ENCODE measurements at regions of chr1 and their contacts with region 1.

Region 1: DNA sequence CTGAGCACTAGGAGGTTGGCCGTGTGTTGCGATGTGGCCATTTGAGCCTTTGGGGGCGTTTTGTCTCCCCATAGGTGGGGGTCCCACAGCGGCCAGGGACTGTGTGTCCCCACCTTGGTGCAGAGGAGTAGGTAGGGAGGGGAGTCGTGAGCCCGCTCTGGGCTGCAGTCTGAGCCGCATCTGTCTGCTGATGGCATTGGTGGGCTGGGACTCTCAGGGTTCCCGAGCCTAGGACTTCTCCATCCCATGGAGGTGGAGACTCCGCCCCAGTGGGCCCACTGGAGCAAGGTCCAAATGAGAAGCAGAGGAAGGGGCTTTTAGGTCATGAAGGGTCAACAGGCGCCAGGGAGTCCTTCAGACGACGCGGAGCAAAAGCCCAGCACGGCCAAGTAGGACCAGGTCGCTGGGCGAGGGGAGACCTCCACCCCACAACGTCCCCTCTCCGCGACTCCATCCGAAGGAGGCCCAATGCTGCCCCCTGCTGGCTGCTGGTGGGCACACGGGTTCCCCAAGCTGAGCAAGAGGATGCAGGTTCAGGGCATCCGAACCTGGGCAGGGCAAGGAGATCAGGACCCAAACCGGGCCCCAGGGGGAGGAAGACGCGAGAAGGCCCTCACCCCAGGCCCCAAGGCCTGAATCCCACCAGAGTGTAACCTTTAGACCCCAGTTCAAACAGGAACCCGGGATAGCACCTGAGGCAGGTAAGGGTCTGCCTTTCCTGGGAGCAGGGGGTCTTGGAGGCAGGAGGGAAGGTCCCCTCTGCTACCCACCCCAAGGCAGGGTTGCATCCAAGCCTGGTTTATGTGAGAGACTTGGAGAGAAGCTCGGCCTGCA is 14.9 kb downstream of the TTC34 start:
- DNase-seq: peak; percentile 47

Region 2: GRCh38 chr1:2194898-2195673 is 591.5 kb before region 1 on chr1:
- in situ Hi-C with region 1: loop called (anchors 25 kb)
- DNase-seq: peak; percentile 89

Region 3: DNA sequence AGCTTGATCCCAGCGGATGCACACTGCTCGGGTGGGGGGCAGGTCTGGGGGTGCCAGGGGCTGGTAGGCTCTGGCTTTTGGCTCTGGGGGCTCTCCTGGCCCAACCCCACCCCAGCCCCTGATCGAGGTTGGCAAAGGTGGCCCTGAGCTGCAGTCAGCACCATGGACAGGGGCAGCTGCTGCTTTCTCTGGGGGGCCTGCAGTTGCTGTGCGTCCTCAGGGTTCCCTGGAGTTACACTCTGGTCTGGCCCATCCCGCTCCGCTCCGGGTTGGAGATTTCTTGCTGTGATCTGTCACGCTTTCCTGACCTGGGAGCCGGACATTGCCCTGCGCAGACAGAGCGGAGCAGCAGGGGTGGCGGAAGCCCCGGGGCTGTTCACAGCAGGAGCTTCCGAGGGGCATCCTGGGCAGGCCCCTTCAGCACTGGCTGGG is 318.5 kb before region 1 on chr1:
- in situ Hi-C with region 1: loop called (anchors 25 kb)
- DNase-seq: peak; percentile 21

Region 4: DNA sequence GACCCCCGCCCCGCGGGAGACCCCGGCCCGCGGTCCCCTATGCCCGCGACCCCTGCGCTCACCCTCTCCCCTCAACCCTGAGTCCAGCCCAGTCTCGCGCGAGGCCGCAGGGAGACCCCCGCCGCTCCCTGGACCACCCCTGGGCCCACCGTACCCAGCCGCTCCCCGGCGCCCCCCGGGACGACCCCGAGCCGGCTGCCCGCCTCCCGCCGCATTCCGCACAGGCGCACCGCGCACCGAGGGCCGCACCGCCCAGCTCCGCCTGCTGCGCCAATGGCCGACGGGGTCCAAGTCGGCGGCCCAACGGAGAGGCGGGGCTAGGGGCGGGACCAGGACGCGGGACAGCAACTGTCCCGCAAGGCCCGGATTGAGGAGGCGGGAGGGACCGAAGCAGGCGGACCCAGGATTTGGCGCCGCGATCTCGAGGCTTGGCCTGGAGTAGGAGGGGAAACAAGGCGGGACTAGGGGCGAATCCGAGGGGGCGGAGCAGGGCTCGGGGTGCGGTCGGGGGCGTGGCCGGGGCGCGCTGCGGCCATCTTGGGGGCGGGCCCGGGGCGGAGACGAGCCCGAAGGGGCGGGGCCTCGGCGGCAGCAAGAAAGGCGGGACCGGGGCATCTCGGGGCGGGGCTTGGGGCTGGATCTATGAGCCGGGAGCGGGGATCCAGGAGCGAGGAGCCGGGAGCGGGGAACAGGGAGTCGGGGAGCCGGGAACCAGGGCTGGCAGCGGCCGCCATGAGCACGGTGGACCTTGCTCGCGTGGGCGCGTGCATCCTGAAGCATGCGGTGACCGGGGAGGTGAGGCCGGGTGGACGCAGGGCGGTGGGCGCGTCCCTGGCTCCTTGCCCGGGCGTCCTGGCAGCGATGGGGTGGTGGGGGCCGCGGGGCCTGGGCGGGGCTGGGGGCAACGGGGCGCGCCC is 200.1 kb before region 1 on chr1 and contains the start of gene PRXL2B:
- in situ Hi-C with region 1: loop called (anchors 25 kb)
- DNase-seq: peak; percentile 95

Measured in KBM-7 (cell line).